CD4-positive, alpha-beta T cell (primary cell): ENCODE measurements at regions of chr16 and their contacts with region 1.

Region 1: GRCh38 chr16:8936421-8936820 is 27.3 kb downstream of the USP7 start:
- DNase-seq: peak; percentile 57 to 85 (median 71)
- ATAC-seq: peak; percentile 99
- H3K4me3 ChIP-seq: no peak overlapping the region
- H3K4me3 Mint-ChIP-seq: peak overlapping the region; percentile 12
- H3K27ac ChIP-seq: no peak overlapping the region
- H3K27ac Mint-ChIP-seq: peak overlapping the region; percentile 18
- H3K4me1 ChIP-seq: peaks cover 68% of the 10 kb centered on the region
- H3K4me1 Mint-ChIP-seq: peaks cover 85% of the 10 kb centered on the region
- H3K27me3 ChIP-seq: no peaks in the 10 kb centered on the region
- H3K27me3 Mint-ChIP-seq: no peaks in the 10 kb centered on the region
- CTCF ChIP-seq: peak; percentile 68

Region 2: DNA sequence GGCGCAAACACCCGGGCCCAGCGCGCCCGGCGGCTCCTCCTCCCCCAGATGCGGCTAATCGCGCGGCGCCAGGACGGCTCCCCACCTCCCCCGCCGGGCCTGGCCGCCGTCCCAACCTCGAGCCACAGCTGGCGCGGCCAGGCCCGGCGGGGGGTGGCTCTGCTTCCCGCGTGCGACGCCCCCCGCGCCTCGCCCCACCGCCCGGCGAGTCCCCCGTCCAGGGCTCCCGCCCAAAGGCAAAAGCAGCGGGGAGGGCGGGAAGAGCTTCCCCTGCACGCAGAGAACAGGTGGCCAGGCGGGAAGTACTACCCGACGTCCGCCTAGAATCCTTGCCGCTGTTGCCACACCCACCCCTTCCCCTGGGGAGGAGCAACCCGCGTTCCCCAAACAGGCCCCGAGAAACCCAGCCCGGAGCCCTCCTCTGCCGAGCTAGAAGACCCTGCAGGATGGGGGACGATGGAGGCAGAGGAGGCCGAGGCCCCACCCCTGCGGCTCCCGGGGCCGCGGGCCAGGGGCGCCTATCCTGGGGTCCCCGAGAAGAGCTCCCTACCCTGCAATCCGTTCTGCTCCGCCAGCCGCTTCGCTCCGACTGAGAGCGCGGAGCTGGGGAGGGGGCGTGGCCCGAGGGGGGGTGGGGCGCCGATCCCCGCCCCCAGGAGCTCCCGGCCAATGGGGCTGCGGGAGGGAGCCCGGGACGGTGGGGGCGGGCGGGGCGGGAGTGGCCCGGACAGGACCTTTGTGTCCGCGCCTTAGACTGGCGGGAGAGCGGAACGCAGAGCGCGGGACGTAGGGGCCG is 67.8 kb before region 1 on chr16 and contains the start of gene CARHSP1:
- CTCF ChIA-PET with region 1: interaction called, 10 read pairs
- POLR2A ChIA-PET with region 1: interaction called, 5 read pairs
- intact Hi-C with region 1: no loop called
- DNase-seq: peak; percentile 62 to 92 (median 76)
- ATAC-seq: peak; percentile 74
- H3K4me3 ChIP-seq: peak within 1 kb of the TSS; percentile 85
- H3K4me3 Mint-ChIP-seq: peak within 1 kb of the TSS; percentile 95
- H3K27ac ChIP-seq: peak within 1 kb of the TSS; percentile 32 to 72
- H3K27ac Mint-ChIP-seq: peak within 1 kb of the TSS; percentile 85
- H3K4me1 ChIP-seq: peaks cover 59% of the 10 kb centered on the region
- H3K4me1 Mint-ChIP-seq: peaks cover 50% of the 10 kb centered on the region
- H3K27me3 ChIP-seq: no peaks in the 10 kb centered on the region
- H3K27me3 Mint-ChIP-seq: no peaks in the 10 kb centered on the region
- CTCF ChIP-seq: no peak
- total RNA-seq, gene CARHSP1: 25.5 to 27.8 TPM

Region 3: GRCh38 chr16:8892101-8892575 is 44.3 kb before region 1 on chr16:
- CTCF ChIA-PET with region 1: interaction called, 19 read pairs
- POLR2A ChIA-PET with region 1: no interaction called
- intact Hi-C with region 1: no loop called
- DNase-seq: peak in 2 of 14 experiments; percentile 14 to 46
- ATAC-seq: no peak
- H3K4me3 ChIP-seq: no peak overlapping the region
- H3K4me3 Mint-ChIP-seq: no peak overlapping the region
- H3K27ac ChIP-seq: peak overlapping the region; percentile 17 to 50
- H3K27ac Mint-ChIP-seq: peak overlapping the region; percentile 92
- H3K4me1 ChIP-seq: peaks cover 14% of the 10 kb centered on the region
- H3K4me1 Mint-ChIP-seq: peaks cover 16% of the 10 kb centered on the region
- H3K27me3 ChIP-seq: no peaks in the 10 kb centered on the region
- H3K27me3 Mint-ChIP-seq: no peaks in the 10 kb centered on the region
- CTCF ChIP-seq: no peak

Region 4: DNA sequence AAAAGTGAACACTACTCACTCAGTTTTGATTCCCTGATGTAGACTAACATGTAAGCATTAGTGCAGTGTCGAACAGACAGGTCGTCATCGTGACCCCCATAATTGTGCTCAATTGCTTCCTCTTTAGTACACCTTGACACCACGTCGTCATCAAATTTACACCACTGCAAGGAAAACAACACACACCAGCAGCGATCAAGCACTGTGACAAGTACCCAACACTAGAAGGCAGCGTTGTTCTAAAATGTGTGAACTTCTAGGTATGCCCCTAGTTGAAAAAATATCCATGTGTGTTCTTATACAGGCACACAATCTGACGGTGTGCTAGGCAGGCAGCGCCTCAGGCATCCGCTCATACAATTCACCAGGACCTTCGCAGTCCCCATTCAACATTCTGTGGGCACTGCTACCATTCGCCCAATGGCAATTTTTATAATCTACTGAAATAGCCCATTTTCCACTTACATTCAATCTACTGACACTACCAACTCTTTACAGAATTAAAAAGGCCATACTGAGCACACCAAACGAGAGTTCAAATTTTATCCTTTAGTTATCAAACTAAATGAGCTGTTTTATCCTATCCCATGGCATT is 31.2 kb before region 1 on chr16:
- CTCF ChIA-PET with region 1: interaction called, 12 read pairs
- POLR2A ChIA-PET with region 1: interaction called, 3 read pairs
- intact Hi-C with region 1: loop called in 1 of 2 experiments (anchors 1 kb)
- DNase-seq: peak in 3 of 14 experiments; percentile 37 to 45 (median 38)
- ATAC-seq: peak; percentile 51
- H3K4me3 ChIP-seq: no peak overlapping the region
- H3K4me3 Mint-ChIP-seq: no peak overlapping the region
- H3K27ac ChIP-seq: no peak overlapping the region
- H3K27ac Mint-ChIP-seq: peak overlapping the region; percentile 3
- H3K4me1 ChIP-seq: peaks cover 11% of the 10 kb centered on the region
- H3K4me1 Mint-ChIP-seq: peaks cover 13% of the 10 kb centered on the region
- H3K27me3 ChIP-seq: no peaks in the 10 kb centered on the region
- H3K27me3 Mint-ChIP-seq: no peaks in the 10 kb centered on the region
- CTCF ChIP-seq: peak; percentile 18

Region 5: DNA sequence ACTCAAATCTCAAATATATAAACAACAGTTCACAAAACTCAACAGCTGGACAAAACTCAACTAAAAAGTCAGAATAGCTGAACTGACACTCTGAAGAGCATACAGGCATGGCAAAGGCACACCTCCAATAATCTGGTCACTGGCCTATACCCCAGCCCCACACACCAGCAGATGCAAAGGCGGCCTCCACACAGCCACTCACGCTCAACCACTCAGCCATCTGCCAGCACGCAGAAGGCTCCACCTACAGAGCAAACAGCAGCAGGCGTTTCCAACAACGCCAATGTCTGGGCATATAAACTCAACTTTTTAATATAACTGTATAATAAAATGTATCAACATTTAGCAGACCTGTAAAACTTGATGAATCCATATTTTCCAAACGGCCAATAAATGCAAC is 10.1 kb after region 1 on chr16:
- CTCF ChIA-PET with region 1: interaction called, 42 read pairs
- POLR2A ChIA-PET with region 1: no interaction called
- intact Hi-C with region 1: no loop called
- DNase-seq: no peak
- ATAC-seq: no peak
- H3K4me3 ChIP-seq: no peak overlapping the region
- H3K4me3 Mint-ChIP-seq: peak overlapping the region; percentile 12
- H3K27ac ChIP-seq: no peak overlapping the region
- H3K27ac Mint-ChIP-seq: peak overlapping the region; percentile 18
- H3K4me1 ChIP-seq: peaks cover 93% of the 10 kb centered on the region
- H3K4me1 Mint-ChIP-seq: peaks cover 99% of the 10 kb centered on the region
- H3K27me3 ChIP-seq: no peaks in the 10 kb centered on the region
- H3K27me3 Mint-ChIP-seq: no peaks in the 10 kb centered on the region
- CTCF ChIP-seq: no peak

Region 6: GRCh38 chr16:9008601-9009260 is 72.3 kb after region 1 on chr16:
- CTCF ChIA-PET with region 1: interaction called, 9 read pairs
- POLR2A ChIA-PET with region 1: interaction called, 3 read pairs
- intact Hi-C with region 1: loop called in 1 of 2 experiments (anchors 1 kb)
- DNase-seq: peak; percentile 47 to 79 (median 60)
- ATAC-seq: peak; percentile 79
- H3K4me3 ChIP-seq: peak overlapping the region; percentile 20
- H3K4me3 Mint-ChIP-seq: no peak overlapping the region
- H3K27ac ChIP-seq: no peak overlapping the region
- H3K27ac Mint-ChIP-seq: no peak overlapping the region
- H3K4me1 ChIP-seq: peaks cover 12% of the 10 kb centered on the region
- H3K4me1 Mint-ChIP-seq: peaks cover 4% of the 10 kb centered on the region
- H3K27me3 ChIP-seq: peaks cover 7% of the 10 kb centered on the region in 2 experiments
- H3K27me3 Mint-ChIP-seq: peaks cover 12% of the 10 kb centered on the region
- CTCF ChIP-seq: peak; percentile 71